Activated CD4-positive, alpha-beta memory T cell treated with anti-CD3 and anti-CD28 coated beads, Interleukin-2, amount 10 ng/mL, durations not matched to agents 7 days and 5 days (primary cell): ENCODE measurements at regions of chr3 and their contacts with region 1.

Region 1: GRCh38 chr3:46368569-46368968 is 2.2 kb upstream of the CCR5 start:
- DNase-seq: peak; percentile 86
- H3K4me3 Mint-ChIP-seq: peak overlapping the region; percentile 1
- H3K27ac Mint-ChIP-seq: peak overlapping the region; percentile 59
- H3K4me1 Mint-ChIP-seq: peaks cover 80% of the 10 kb centered on the region
- H3K27me3 Mint-ChIP-seq: peaks cover 10% of the 10 kb centered on the region

Region 2: GRCh38 chr3:45816544-45816943 is 552.0 kb before region 1 on chr3:
- CTCF ChIA-PET with region 1: no interaction called
- POLR2A ChIA-PET with region 1: no interaction called
- DNase-seq: no peak
- H3K4me3 Mint-ChIP-seq: no peak overlapping the region
- H3K27ac Mint-ChIP-seq: no peak overlapping the region
- H3K4me1 Mint-ChIP-seq: peaks cover 8% of the 10 kb centered on the region
- H3K27me3 Mint-ChIP-seq: peaks cover 4% of the 10 kb centered on the region

Region 3: GRCh38 chr3:45978006-45978761 is 390.4 kb before region 1 on chr3:
- CTCF ChIA-PET with region 1: interaction called, 3 read pairs
- POLR2A ChIA-PET with region 1: interaction called, 14 read pairs
- DNase-seq: peak; percentile 83
- H3K4me3 Mint-ChIP-seq: peak overlapping the region; percentile 50
- H3K27ac Mint-ChIP-seq: peak overlapping the region; percentile 97
- H3K4me1 Mint-ChIP-seq: peaks cover 84% of the 10 kb centered on the region
- H3K27me3 Mint-ChIP-seq: no peaks in the 10 kb centered on the region

Region 4: DNA sequence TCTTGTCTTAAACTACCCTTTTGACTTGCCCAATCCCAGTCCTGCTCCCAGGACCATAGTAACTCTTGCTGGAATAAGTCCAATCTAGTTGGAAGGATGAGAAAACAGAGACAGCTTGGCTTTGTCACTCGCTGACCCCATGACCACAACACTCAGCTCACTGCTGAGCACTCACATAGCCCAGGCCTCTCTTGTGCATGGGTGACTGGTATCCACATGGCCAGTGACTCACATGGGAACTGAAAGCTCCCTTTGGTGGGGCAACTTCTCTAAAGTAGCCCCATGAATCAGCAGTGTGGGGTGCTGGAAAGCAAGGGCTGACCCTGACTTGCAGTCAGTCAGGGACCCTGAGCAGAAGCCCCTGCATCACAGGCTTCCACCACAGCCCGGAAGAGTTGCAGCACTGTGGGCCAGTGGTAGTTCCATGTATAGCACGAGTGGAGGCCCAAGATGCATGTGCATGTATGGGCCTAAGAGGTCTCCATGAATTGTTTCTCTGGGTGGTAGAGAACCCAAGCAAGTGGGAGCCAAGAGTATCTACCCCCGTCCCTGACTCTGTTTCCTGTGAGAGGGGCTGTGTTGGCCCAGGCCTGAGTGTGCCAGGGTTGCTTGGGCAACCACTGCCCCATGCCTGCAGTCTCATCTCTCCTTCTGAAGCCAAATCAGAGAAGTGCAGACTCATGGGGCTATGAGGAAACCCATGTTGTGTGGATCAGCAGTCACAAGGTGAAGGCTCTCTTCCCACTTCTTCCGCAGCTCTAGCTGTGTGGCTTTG is 279.1 kb before region 1 on chr3:
- CTCF ChIA-PET with region 1: interaction called, 85 read pairs
- POLR2A ChIA-PET with region 1: interaction called, 47 read pairs
- DNase-seq: peak; percentile 29
- H3K4me3 Mint-ChIP-seq: no peak overlapping the region
- H3K27ac Mint-ChIP-seq: no peak overlapping the region
- H3K4me1 Mint-ChIP-seq: peaks cover 59% of the 10 kb centered on the region
- H3K27me3 Mint-ChIP-seq: peaks cover 27% of the 10 kb centered on the region

Region 5: DNA sequence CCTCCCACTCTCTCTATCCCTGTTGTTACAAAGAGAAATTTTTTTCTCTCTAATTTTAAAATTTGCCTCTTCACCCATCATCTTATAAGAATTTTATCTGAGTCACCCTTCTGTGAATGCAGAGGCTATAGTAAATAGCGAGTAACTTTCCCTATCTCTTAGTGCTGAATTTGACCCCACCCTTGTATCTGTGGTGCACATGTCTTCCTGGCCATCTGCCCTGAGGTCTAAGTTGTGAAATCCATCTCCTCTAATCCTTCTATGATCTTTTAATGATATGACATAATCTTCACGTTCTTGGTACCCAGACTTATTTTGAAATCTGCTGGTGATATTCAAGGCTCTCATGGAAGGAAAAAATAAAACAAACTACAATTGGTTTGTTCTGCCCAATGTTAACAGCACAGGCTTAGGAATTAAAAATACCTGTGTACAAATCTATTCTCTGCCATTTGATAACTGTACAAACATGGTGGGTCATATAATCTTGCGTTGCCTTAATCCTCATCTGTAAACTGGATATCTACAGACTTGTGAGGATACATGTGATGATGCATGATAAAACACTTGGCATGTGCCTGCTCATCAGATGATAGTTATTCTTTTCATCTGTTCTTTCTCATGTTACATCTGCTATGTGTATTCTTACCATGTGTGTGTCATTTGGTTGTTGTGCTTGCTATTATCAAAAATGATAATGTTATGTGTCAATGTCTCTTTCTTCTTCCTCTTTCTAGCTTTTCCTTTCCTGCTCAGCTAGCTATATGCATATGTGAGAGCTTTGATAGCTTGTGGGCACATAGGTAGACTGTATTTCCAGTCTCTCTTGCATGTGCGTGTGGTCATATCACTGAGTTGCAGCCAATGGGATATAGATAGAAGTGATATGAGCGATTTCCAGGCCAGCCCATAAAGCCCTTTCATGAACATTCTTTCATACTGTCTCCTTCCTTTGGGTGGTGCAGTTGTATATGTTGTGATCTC is 140.0 kb before region 1 on chr3:
- CTCF ChIA-PET with region 1: interaction called, 16 read pairs
- POLR2A ChIA-PET with region 1: interaction called, 4 read pairs
- DNase-seq: peak; percentile 46
- H3K4me3 Mint-ChIP-seq: no peak overlapping the region
- H3K27ac Mint-ChIP-seq: peak overlapping the region; percentile 35
- H3K4me1 Mint-ChIP-seq: peaks cover 41% of the 10 kb centered on the region
- H3K27me3 Mint-ChIP-seq: peaks cover 43% of the 10 kb centered on the region

Region 6: GRCh38 chr3:46297658-46298463 is 70.7 kb before region 1 on chr3:
- CTCF ChIA-PET with region 1: interaction called, 147 read pairs
- POLR2A ChIA-PET with region 1: interaction called, 167 read pairs
- DNase-seq: no peak
- H3K4me3 Mint-ChIP-seq: no peak overlapping the region
- H3K27ac Mint-ChIP-seq: peak overlapping the region; percentile 93
- H3K4me1 Mint-ChIP-seq: peaks cover 93% of the 10 kb centered on the region
- H3K27me3 Mint-ChIP-seq: peaks cover 3% of the 10 kb centered on the region

Region 7: DNA sequence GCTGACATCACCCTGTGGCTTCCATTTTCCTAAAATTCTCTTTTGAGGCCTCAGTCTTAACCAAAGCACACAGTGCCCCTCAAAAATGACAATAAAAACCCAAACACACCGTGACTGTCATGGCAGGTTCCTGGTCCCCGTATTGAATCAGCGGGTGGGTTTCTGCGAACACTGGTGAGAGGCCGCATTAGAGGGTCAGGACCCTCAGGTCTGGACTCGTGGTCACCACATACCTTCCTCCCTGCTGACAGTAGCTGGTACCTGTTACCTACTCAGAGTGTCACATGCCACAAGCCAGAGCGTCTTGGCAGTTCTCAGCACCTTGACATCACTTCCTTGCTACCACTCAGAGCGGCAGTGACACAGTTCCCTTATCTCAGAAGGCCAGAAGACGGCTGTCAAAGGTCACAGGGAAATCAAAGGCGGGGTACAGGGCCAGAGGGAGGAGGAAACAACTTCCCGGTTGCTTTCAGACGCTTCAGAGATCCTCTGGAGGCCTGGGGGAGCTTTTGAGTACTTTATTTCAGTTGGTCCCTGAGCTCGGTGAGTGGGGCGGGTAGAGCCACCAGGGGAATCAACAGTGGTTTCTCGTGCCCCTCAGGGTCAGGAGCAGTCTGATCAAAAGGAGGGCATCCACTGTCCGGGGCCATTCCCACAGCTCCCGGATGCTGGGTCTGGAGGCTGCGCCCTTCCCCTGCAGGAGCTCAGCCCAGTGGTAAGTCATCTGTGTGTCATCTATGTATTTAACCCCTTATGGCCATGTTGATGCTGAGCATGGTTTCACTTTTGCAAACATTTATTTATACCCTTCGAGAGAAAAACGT is 38.4 kb after region 1 on chr3 and contains the starts of genes CCR5AS and CCRL2:
- CTCF ChIA-PET with region 1: interaction called, 6 read pairs
- POLR2A ChIA-PET with region 1: interaction called, 19 read pairs
- DNase-seq: peak; percentile 60
- H3K4me3 Mint-ChIP-seq: peak within 1 kb of the TSS; percentile 78
- H3K27ac Mint-ChIP-seq: peak within 1 kb of the TSS; percentile 83
- H3K4me1 Mint-ChIP-seq: peaks cover 33% of the 10 kb centered on the region
- H3K27me3 Mint-ChIP-seq: peaks cover 19% of the 10 kb centered on the region
- total RNA-seq, gene CCRL2: 5.4 to 6.2 TPM

Region 8: DNA sequence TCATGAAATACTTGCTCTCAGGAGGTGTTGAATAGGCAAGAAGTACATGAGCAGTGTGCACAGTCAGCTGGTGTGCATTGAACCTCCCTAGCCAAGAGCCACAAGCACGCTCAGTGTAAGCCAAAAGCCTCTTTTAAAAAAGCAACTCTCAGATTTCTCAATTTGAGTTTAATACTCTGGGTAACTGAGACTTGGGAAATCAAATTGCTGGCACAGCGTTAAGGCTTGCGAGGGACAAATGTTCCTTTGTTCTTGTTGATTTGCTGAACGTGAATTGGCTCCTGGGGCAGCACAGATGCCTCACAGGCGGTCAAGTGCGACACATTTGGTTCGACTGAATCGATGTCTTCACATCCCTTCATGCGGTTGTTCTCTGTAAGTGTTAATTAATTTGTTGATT is 243.8 kb after region 1 on chr3 and contains the start of gene FAM240A:
- CTCF ChIA-PET with region 1: no interaction called
- POLR2A ChIA-PET with region 1: no interaction called
- DNase-seq: no peak
- H3K4me3 Mint-ChIP-seq: no peak within 1 kb of the TSS
- H3K27ac Mint-ChIP-seq: no peak within 1 kb of the TSS
- H3K4me1 Mint-ChIP-seq: no peaks in the 10 kb centered on the region
- H3K27me3 Mint-ChIP-seq: peaks cover 34% of the 10 kb centered on the region
- total RNA-seq, gene FAM240A: not detected

Region 9: DNA sequence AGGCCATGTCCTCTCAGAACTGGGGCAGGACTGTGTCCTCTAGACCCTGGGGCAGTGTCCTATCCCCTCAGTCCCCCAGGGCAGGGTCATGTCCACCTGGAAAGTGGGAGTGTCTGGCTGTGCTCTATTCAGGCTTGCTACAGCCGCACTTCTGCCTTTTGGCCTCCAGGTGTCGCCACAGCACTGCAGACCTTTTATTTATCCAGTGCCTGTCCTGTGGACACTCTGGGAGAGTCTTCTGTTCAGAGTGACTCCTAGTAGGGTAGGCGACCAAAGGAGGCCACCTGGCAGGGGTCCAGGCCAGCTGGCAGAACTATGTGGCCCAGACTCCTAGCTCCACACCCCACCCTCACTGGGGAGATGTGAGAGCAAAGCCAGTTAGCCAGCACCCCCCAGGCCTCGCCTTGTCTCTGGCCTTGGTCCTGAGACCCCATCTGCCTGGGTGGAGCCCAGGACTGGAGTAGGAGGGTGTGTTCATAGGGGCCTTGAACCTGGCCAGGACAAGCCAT is 336.5 kb after region 1 on chr3:
- CTCF ChIA-PET with region 1: no interaction called
- POLR2A ChIA-PET with region 1: no interaction called
- DNase-seq: peak; percentile 77
- H3K4me3 Mint-ChIP-seq: no peak overlapping the region
- H3K27ac Mint-ChIP-seq: no peak overlapping the region
- H3K4me1 Mint-ChIP-seq: no peaks in the 10 kb centered on the region
- H3K27me3 Mint-ChIP-seq: peaks cover 20% of the 10 kb centered on the region

Region 10: GRCh38 chr3:47145272-47145671 is 776.7 kb after region 1 on chr3:
- CTCF ChIA-PET with region 1: no interaction called
- POLR2A ChIA-PET with region 1: no interaction called
- DNase-seq: no peak
- H3K4me3 Mint-ChIP-seq: no peak overlapping the region
- H3K27ac Mint-ChIP-seq: no peak overlapping the region
- H3K4me1 Mint-ChIP-seq: peaks cover 24% of the 10 kb centered on the region
- H3K27me3 Mint-ChIP-seq: no peaks in the 10 kb centered on the region